ENCODE measurements at regions of chr10 and their contacts with region 1.

Region 1: DNA sequence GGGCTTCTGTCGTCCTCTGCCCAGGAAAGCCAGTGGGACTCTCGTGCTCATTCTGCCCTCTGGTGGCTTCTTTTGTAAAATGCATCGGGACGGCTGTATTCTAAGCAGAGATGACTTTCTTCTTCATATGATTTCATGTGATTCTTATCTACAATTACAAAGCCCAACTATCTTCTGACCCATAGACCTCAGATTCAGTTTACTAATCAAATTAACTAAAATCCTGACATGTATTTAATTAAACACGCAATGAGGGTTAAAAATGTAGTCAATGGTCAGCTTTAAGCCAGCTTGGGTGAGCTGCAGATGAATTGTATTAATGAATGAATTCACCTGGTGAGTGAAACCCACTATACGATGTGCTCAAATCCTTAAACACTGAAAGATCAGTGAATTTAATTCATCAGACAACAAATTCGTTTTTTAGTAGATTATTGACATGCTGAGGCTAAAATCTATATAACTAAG is 117.6 kb upstream of the FAM204A start:
- DNase-seq: peak in 8 of 9 experiments; percentile 21 to 61 (median 50)
- ATAC-seq: no peak
- H3K4me3 ChIP-seq: no peak overlapping the region
- H3K4me3 Mint-ChIP-seq: peak overlapping the region; percentile 60
- H3K27ac ChIP-seq: no peak overlapping the region
- H3K27ac Mint-ChIP-seq: no peak overlapping the region
- H3K4me1 ChIP-seq: no peaks in the 10 kb centered on the region
- H3K4me1 Mint-ChIP-seq: peaks cover 6% of the 10 kb centered on the region
- H3K27me3 ChIP-seq: no peaks in the 10 kb centered on the region
- H3K27me3 Mint-ChIP-seq: peaks cover 40% of the 10 kb centered on the region
- CTCF ChIP-seq: peak; percentile 67

Region 2: GRCh38 chr10:116878124-116878523 is 1581.6 kb before region 1 on chr10:
- CTCF ChIA-PET with region 1: no interaction called
- POLR2A ChIA-PET with region 1: no interaction called
- intact Hi-C with region 1: loop called in 1 of 2 experiments (anchors 10 kb)
- DNase-seq: no peak
- ATAC-seq: no peak
- H3K4me3 ChIP-seq: no peak overlapping the region
- H3K4me3 Mint-ChIP-seq: no peak overlapping the region
- H3K27ac ChIP-seq: no peak overlapping the region
- H3K27ac Mint-ChIP-seq: no peak overlapping the region
- H3K4me1 ChIP-seq: no peaks in the 10 kb centered on the region
- H3K4me1 Mint-ChIP-seq: no peaks in the 10 kb centered on the region
- H3K27me3 ChIP-seq: no peaks in the 10 kb centered on the region
- H3K27me3 Mint-ChIP-seq: peaks cover 10% of the 10 kb centered on the region
- CTCF ChIP-seq: no peak

Region 3: GRCh38 chr10:118447478-118448270 is 12.1 kb before region 1 on chr10:
- CTCF ChIA-PET with region 1: interaction called, 30 read pairs
- POLR2A ChIA-PET with region 1: no interaction called
- intact Hi-C with region 1: no loop called
- DNase-seq: no peak
- ATAC-seq: no peak
- H3K4me3 ChIP-seq: no peak overlapping the region
- H3K4me3 Mint-ChIP-seq: no peak overlapping the region
- H3K27ac ChIP-seq: no peak overlapping the region
- H3K27ac Mint-ChIP-seq: no peak overlapping the region
- H3K4me1 ChIP-seq: no peaks in the 10 kb centered on the region
- H3K4me1 Mint-ChIP-seq: no peaks in the 10 kb centered on the region
- H3K27me3 ChIP-seq: no peaks in the 10 kb centered on the region
- H3K27me3 Mint-ChIP-seq: peaks cover 36% of the 10 kb centered on the region
- CTCF ChIP-seq: no peak

Measured in CD8-positive, alpha-beta T cell (primary cell).